ENCODE measurements at regions of chr7 and their contacts with region 1.

Region 1: DNA sequence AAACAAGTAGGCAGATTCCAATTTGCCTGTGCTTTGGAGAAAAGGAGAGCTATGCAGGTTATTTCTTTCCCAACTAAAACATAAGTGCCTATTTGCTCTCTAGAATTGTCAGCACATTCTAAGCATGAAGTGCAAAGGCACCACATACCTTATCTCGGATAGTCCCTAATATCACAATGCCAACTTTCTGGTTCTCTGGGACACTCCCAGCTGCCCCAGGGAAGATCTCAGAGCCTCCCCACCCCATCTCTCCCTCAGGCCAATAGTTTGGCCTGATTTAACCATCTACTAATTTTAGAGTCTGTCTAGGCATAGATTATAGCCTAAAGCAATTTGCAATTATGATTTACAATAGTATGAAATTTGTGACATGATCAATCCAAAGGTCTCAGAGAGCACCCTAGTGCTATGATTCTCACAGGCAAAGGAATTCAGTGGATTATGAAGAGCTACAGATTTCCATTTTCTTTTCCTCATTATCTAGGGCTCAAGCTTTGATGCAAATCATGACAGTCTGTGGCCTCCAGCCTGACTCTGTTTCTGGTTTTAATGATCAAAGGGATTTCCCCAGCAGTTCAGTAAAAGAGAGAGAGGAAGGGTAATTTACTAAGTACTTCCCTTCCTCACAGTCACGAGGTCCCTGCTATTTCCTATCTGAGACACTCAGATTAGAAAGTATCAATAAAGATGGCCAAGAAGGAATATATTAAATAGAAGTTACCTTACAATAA is 29.0 kb upstream of the IL6 start:
- DNase-seq: peak; percentile 78
- H3K4me3 Mint-ChIP-seq: peak overlapping the region; percentile 48
- H3K27ac Mint-ChIP-seq: peak overlapping the region; percentile 54
- H3K4me1 Mint-ChIP-seq: peaks cover 69% of the 10 kb centered on the region
- H3K27me3 Mint-ChIP-seq: peaks cover 14% of the 10 kb centered on the region

Region 2: GRCh38 chr7:22480523-22481075 is 217.4 kb before region 1 on chr7:
- intact Hi-C with region 1: no loop called
- DNase-seq: no peak
- H3K4me3 Mint-ChIP-seq: no peak overlapping the region
- H3K27ac Mint-ChIP-seq: no peak overlapping the region
- H3K4me1 Mint-ChIP-seq: peaks cover 11% of the 10 kb centered on the region
- H3K27me3 Mint-ChIP-seq: peaks cover 4% of the 10 kb centered on the region

Region 3: DNA sequence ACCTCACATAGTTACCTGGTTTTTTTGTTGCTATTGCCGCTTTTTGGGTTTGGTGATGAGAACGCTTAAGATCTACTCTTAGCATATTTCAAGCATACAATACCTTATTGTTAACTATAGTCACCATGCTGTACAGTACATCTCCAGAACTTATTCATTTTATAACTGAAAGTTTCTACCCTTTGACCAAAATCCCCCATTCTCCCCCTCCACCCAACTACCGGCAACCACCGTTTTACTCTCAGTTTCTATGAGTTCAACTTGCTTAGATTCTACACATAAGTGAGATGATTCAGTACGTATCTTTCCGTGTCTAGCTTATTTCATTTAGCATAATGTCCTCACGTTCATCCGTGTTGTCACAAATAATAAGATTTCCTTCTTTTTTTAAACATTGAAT is 57.8 kb before region 1 on chr7:
- intact Hi-C with region 1: loop called (anchors 1 kb)
- DNase-seq: peak; percentile 74
- H3K4me3 Mint-ChIP-seq: no peak overlapping the region
- H3K27ac Mint-ChIP-seq: no peak overlapping the region
- H3K4me1 Mint-ChIP-seq: peaks cover 10% of the 10 kb centered on the region
- H3K27me3 Mint-ChIP-seq: peaks cover 30% of the 10 kb centered on the region

Region 4: DNA sequence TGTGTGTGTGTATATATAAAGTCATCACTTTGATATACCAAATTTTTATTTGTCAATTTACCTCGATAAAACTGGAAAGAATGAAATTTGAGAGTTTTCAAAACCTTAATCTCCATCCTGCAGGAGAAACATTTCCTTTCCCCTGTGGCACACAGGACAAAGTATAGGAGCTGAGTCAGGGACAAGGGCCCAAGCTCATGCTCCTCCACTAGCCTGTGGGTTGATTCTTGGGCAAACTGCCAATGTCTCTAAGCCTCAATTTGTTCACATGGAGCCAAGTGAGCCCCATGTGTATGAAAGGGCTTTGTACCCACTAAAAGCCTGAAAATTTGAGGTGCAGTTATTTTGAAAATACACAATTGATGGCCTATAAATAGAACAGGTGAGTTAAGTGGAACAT is 31.3 kb before region 1 on chr7:
- intact Hi-C with region 1: loop called (anchors 1 kb)
- DNase-seq: no peak
- H3K4me3 Mint-ChIP-seq: no peak overlapping the region
- H3K27ac Mint-ChIP-seq: no peak overlapping the region
- H3K4me1 Mint-ChIP-seq: peaks cover 44% of the 10 kb centered on the region
- H3K27me3 Mint-ChIP-seq: peaks cover 16% of the 10 kb centered on the region

Region 5: GRCh38 chr7:22672846-22673652 is 25.0 kb before region 1 on chr7:
- intact Hi-C with region 1: loop called (anchors 1 kb)
- DNase-seq: peak; percentile 73
- H3K4me3 Mint-ChIP-seq: peak overlapping the region; percentile 26
- H3K27ac Mint-ChIP-seq: no peak overlapping the region
- H3K4me1 Mint-ChIP-seq: peaks cover 55% of the 10 kb centered on the region
- H3K27me3 Mint-ChIP-seq: peaks cover 8% of the 10 kb centered on the region

Region 6: GRCh38 chr7:22726345-22727185 is 28.5 kb after region 1 on chr7:
- intact Hi-C with region 1: loop called (anchors 2 kb)
- DNase-seq: peak; percentile 87
- H3K4me3 Mint-ChIP-seq: peak overlapping the region; percentile 68
- H3K27ac Mint-ChIP-seq: peak overlapping the region; percentile 19
- H3K4me1 Mint-ChIP-seq: peaks cover 32% of the 10 kb centered on the region
- H3K27me3 Mint-ChIP-seq: peaks cover 30% of the 10 kb centered on the region

Region 7: GRCh38 chr7:23020742-23021401 is 322.8 kb after region 1 on chr7:
- intact Hi-C with region 1: loop called (anchors 2 kb)
- DNase-seq: peak; percentile 70
- H3K4me3 Mint-ChIP-seq: peak overlapping the region; percentile 41
- H3K27ac Mint-ChIP-seq: peak overlapping the region; percentile 93
- H3K4me1 Mint-ChIP-seq: peaks cover 46% of the 10 kb centered on the region
- H3K27me3 Mint-ChIP-seq: peaks cover 13% of the 10 kb centered on the region